Cardiac septum (tissue), 1 donor: ENCODE measurements at regions of chr3 and their contacts with region 1.

Region 1: DNA sequence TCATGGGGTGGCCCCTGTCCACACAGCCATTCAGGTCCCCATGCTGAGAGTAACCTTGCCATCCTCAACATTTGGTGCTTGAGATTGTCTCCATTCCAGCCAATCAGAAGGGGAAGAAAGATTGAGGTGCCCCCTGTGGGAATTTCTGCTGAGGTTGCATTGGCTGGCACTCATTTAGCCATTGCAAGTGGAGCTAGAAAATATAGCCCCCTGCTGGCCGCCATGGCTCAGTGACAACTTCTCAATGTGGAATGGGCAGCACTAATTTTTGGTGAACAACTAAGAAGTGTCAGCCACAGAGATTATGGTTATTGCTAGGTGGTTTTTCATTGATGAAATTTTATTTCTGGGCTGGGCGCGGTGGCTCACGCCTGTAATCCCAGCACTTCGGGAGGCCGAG is 22.0 kb downstream of the COL6A6 start:
- DNase-seq: no peak

Region 2: DNA sequence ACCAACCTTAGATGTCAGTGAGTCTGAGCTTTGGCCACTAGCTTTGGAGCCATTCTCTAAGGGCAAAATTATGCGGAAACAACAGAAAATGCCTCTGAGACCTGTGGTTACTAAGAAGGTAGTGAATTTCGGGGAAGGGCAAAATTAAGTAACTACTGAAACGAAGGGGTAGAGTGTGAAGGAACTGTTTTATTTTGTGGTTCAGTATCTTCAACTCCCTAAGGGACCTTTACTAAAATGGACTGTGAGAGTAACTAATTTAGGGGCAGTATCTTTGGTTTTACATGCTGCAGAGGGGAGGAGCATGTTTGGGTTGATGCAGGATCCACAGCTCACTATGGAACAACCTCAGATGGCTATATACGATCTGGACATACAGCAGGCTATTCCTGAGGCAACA is 465.4 kb before region 1 on chr3:
- intact Hi-C with region 1: no loop called
- DNase-seq: no peak

Region 3: DNA sequence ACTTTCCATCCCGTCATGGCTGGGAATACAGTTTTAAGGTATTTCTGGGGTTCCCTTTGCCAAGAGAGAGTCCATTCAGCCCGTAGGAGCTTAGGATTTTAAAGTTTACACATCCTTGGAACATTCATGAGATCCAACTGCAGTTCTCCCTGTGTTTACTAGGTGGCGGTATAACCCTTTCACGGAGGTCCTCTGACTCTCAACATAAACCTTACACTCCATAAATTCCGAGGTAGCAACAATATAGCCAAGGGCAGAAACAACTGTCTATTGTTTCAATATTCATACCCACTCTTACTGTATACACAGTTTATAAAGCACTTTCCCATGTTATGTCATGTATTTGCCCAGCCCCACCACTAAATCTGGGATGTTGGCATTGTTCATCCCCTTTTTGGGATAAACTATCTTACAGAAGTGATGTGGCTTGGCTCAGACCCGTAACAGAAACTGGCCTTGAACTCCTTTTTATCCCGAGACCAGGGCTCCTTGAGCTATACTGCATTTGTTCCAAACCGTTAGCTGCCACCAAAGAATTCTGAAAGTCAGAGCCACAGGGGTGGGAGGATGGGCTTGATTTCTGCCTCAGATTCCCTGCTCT is 262.7 kb before region 1 on chr3:
- intact Hi-C with region 1: loop called (anchors 2 kb)
- DNase-seq: no peak